Gastrocnemius medialis (tissue), 4 donors: ENCODE measurements at regions of chr6 and their contacts with region 1.

Region 1: GRCh38 chr6:103264020-103264419 is 1595.7 kb downstream of the HACE1 start:
- DNase-seq: no peak
- ATAC-seq: no peak
- H3K4me3 ChIP-seq: no peak overlapping the region
- H3K27ac ChIP-seq: no peak overlapping the region
- H3K4me1 ChIP-seq: no peaks in the 10 kb centered on the region
- H3K27me3 ChIP-seq: no peaks in the 10 kb centered on the region
- CTCF ChIP-seq: no peak
- POLR2A ChIP-seq: no peak

Region 2: DNA sequence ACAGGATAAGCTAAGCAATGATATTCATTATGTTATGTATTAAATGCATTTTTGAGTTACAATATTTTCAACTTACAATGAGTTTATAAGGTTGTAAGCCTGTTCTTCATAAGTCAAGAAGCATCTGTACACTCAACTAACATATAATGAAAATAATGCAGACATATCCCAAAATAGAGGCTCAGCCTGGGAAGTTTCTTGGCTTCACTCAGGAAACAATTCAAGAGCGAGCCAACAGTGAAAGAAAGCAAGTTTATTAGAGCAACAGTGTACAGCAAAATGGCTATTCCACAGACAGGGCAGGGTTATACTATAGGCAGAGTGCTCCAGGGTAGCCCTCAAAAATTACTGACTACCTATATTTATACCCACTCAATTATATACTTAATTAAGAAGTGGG is 13.9 kb after region 1 on chr6:
- in situ Hi-C with region 1: no loop called
- intact Hi-C with region 1: no loop called
- DNase-seq: no peak
- ATAC-seq: no peak
- H3K4me3 ChIP-seq: no peak overlapping the region
- H3K27ac ChIP-seq: no peak overlapping the region
- H3K4me1 ChIP-seq: no peaks in the 10 kb centered on the region
- H3K27me3 ChIP-seq: no peaks in the 10 kb centered on the region
- CTCF ChIP-seq: no peak
- POLR2A ChIP-seq: no peak

Region 3: GRCh38 chr6:103326760-103327757 is 63.0 kb after region 1 on chr6:
- in situ Hi-C with region 1: loop called in 1 of 4 experiments (anchors 10 kb)
- intact Hi-C with region 1: no loop called
- DNase-seq: no peak
- ATAC-seq: no peak
- H3K4me3 ChIP-seq: no peak overlapping the region
- H3K27ac ChIP-seq: no peak overlapping the region
- H3K4me1 ChIP-seq: no peaks in the 10 kb centered on the region
- H3K27me3 ChIP-seq: no peaks in the 10 kb centered on the region
- CTCF ChIP-seq: no peak
- POLR2A ChIP-seq: no peak